ENCODE measurements at regions of chr1 and their contacts with region 1.

Region 1: DNA sequence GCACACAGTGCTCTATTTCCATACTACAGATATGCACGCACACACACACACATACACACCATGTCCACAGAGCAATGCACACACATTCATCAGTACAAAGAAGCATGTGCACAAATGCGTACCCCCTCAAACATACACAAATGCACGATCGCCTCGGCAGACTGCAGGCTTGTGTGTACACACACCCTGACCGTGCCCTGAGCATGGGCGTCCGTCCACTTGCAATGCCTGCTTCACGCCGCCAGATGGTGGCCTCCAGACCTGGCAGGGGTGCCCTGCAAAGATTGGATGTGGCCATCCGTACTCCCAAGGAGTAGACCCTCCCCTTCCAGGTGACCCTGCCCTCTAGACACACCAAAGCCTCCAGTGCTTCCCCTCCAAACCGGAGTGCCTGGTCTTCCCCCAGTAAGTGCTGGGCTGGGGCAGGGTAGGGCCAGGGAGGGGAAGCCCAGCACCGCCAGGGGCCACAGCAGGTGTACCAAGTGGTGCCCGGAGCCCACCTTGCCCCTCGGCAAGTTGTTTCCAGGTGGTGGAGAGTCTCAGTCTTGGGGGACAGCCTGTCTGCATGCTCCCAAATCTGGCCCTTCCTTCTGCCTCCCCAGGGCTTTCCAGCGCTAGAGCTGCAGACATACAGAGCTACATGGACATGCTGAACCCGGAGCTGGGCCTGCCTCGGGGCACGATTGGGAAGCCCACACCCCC is 20.6 kb downstream of the ESPN start:
- DNase-seq: peak in 5 of 9 experiments; percentile 46 to 56 (median 50)
- ATAC-seq: no peak
- H3K4me3 ChIP-seq: no peak overlapping the region
- H3K4me3 Mint-ChIP-seq: no peak overlapping the region
- H3K27ac ChIP-seq: no peak overlapping the region
- H3K27ac Mint-ChIP-seq: no peak overlapping the region
- H3K4me1 ChIP-seq: peaks cover 26% of the 10 kb centered on the region
- H3K4me1 Mint-ChIP-seq: peaks cover 27% of the 10 kb centered on the region
- H3K27me3 ChIP-seq: peaks cover 24 to 30% of the 10 kb centered on the region in 2 experiments
- H3K27me3 Mint-ChIP-seq: peaks cover 37% of the 10 kb centered on the region
- CTCF ChIP-seq: peak; percentile 23

Region 2: DNA sequence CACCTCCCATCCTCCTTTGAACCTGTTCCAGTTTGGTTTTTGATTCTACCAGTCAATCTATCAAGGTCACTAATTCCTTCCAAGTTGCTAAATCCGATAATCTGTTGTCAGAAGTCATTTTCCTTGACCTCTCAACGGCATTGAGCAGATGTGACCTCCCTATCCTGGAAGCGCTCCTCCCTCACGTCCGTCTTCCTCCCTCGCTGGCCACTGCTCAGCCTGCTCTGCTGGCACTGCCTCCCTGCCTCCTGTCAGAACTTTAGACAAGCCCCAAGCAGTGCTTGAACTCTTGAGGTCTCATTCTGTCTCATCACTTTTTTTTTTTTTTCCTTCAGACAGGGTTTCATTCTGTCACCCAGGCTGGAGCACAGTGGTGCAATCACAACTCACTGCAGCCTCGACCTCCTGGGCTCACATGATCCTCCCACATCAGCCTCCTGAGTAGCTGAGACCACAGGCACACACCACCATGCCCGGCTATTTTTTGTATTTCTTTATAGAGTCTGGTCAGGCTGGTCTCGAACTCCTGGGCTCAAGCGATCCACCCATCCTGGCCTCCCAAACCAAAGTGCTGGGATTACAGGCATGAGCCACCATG is 47.3 kb before region 1 on chr1:
- CTCF ChIA-PET with region 1: no interaction called
- POLR2A ChIA-PET with region 1: no interaction called
- intact Hi-C with region 1: no loop called
- DNase-seq: no peak
- ATAC-seq: no peak
- H3K4me3 ChIP-seq: no peak overlapping the region
- H3K4me3 Mint-ChIP-seq: no peak overlapping the region
- H3K27ac ChIP-seq: no peak overlapping the region
- H3K27ac Mint-ChIP-seq: no peak overlapping the region
- H3K4me1 ChIP-seq: peaks cover 6% of the 10 kb centered on the region
- H3K4me1 Mint-ChIP-seq: peaks cover 17% of the 10 kb centered on the region
- H3K27me3 ChIP-seq: no peaks in the 10 kb centered on the region
- H3K27me3 Mint-ChIP-seq: peaks cover 3% of the 10 kb centered on the region
- CTCF ChIP-seq: no peak

Region 3: GRCh38 chr1:6464514-6464836 is 19.3 kb after region 1 on chr1:
- CTCF ChIA-PET with region 1: interaction called, 17 read pairs
- POLR2A ChIA-PET with region 1: interaction called, 30 read pairs
- intact Hi-C with region 1: loop called in 1 of 2 experiments (anchors 1 kb)
- DNase-seq: peak in 2 of 9 experiments; percentile 38 to 44
- ATAC-seq: no peak
- H3K4me3 ChIP-seq: peak overlapping the region; percentile 88 to 95
- H3K4me3 Mint-ChIP-seq: peak overlapping the region; percentile 91
- H3K27ac ChIP-seq: peak overlapping the region; percentile 72 to 87
- H3K27ac Mint-ChIP-seq: peak overlapping the region; percentile 95
- H3K4me1 ChIP-seq: peaks cover 52% of the 10 kb centered on the region
- H3K4me1 Mint-ChIP-seq: peaks cover 44% of the 10 kb centered on the region
- H3K27me3 ChIP-seq: no peaks in the 10 kb centered on the region
- H3K27me3 Mint-ChIP-seq: no peaks in the 10 kb centered on the region
- CTCF ChIP-seq: no peak

Region 4: DNA sequence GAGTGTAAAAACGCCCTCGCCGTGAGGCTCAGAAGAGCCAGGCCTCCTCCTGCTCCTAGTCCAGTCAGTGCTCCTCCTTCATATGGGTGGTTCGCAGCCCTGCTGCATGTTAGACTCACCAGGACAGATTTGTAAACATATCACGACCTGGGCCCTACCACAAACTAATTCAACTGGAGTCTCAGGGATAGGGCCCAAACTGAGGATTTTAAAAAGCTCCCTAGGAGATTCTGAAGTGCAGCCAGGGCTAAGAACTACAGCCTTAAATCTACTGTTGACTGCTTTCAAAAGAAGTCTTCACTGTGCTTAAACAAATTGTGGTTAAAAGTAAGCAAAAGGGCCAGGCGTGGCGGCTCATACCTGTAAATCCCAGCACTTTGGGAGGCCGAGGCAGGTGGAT is 397.1 kb after region 1 on chr1:
- CTCF ChIA-PET with region 1: no interaction called
- POLR2A ChIA-PET with region 1: no interaction called
- intact Hi-C with region 1: no loop called
- DNase-seq: no peak
- ATAC-seq: no peak
- H3K4me3 ChIP-seq: no peak overlapping the region
- H3K4me3 Mint-ChIP-seq: no peak overlapping the region
- H3K27ac ChIP-seq: no peak overlapping the region
- H3K27ac Mint-ChIP-seq: no peak overlapping the region
- H3K4me1 ChIP-seq: no peaks in the 10 kb centered on the region
- H3K4me1 Mint-ChIP-seq: peaks cover 10% of the 10 kb centered on the region
- H3K27me3 ChIP-seq: no peaks in the 10 kb centered on the region
- H3K27me3 Mint-ChIP-seq: no peaks in the 10 kb centered on the region
- CTCF ChIP-seq: no peak